Activated CD4-positive, alpha-beta T cell treated with anti-CD3 and anti-CD28 coated beads, Interleukin-2, amount 10 ng/mL, durations not matched to agents 24 days and 14 days (primary cell): ENCODE measurements at regions of chr17 and their contacts with region 1.

Region 1: DNA sequence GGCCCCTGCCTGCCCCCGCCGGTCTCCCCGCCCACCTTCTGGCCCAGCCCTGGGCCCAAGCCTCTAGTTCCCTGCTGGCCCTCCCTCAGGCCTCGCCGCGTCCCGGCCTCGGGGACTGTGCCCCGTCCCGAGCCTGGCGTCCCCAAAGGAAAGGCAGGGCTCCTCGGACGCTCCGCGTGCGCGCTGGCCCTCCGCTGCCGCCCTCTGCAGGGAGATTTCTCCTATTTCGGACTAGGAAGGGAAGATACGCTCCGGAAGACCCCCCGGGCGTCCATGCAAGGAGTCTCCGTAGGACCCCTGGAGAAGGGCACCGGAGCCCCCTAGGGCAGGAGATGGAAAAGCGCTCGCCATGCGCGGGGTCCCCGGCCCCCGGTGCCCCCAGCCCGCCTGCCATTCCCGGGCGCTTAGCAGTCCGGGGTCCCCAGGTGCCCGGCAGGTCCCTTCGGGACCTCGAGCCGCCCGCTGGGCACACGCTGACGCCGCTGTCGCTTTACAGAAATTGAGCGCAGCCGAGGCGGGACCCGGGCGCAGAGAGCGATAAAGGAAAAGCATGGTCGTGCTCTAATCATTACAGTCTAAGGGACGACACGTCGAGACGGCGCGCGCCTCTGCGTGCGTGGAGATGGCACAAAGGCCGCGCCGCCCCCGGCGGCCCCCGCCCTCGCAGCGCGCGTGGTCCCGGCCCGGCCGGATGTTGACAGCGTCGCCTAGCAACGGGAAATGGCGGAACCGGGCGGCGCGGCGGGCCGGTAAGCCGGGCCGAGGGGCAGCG is at the start of gene CCDC40:
- DNase-seq: peak; percentile 95
- H3K4me3 Mint-ChIP-seq: peak within 1 kb of the TSS; percentile 88
- H3K27ac Mint-ChIP-seq: peak within 1 kb of the TSS; percentile 90
- H3K4me1 Mint-ChIP-seq: peaks cover 7% of the 10 kb centered on the region
- H3K27me3 Mint-ChIP-seq: peaks cover 54% of the 10 kb centered on the region
- total RNA-seq, gene CCDC40: 0.37 and 0.54 TPM in 2 replicates

Region 2: GRCh38 chr17:79915850-79916430 is 120.2 kb before region 1 on chr17:
- intact Hi-C with region 1: no loop called
- DNase-seq: peak; percentile 71
- H3K4me3 Mint-ChIP-seq: no peak overlapping the region
- H3K27ac Mint-ChIP-seq: no peak overlapping the region
- H3K4me1 Mint-ChIP-seq: no peaks in the 10 kb centered on the region
- H3K27me3 Mint-ChIP-seq: no peaks in the 10 kb centered on the region

Region 3: GRCh38 chr17:80008383-80008840 is 27.7 kb before region 1 on chr17:
- intact Hi-C with region 1: loop called (anchors 2 kb)
- DNase-seq: peak; percentile 94
- H3K4me3 Mint-ChIP-seq: no peak overlapping the region
- H3K27ac Mint-ChIP-seq: no peak overlapping the region
- H3K4me1 Mint-ChIP-seq: peaks cover 4% of the 10 kb centered on the region
- H3K27me3 Mint-ChIP-seq: peaks cover 2% of the 10 kb centered on the region